AG04449 (cell line): ENCODE measurements at regions of chr1 and their contacts with region 1.

Region 1: GRCh38 chr1:163174524-163175437 is 27.9 kb downstream of the RGS5 start:
- DNase-seq: no peak
- H3K4me3 ChIP-seq: no peak overlapping the region
- CTCF ChIP-seq: peak; percentile 76

Region 2: DNA sequence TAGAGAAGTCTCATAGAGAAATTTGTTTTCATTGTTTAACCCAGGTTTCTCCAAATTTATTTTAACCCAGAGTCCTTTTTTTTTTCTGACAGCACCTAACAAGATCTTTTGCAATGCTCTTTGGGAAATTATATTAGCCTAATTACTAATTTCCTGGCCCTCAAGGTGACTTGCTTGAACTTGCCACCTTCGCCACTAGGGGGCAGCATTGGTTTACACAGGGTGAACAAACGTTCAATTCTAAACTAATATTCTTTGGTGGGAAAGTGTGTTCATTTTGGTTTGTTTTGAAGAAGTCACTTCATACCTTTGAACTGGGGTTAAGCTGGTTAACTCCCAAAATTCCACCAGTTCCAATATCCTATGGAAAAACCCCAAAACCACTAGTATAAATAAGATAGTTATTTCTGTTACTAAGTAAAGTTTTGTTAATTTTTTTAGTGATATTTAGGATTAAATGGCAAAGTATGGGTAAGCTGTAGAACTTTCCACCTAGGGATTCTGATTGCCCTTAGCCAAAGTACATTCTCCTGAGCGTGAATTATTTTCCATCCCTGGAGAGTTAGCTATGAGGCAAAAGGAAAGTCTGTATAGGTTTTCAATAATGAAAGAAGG is 326.8 kb before region 1 on chr1:
- CTCF ChIA-PET with region 1: interaction called, 79 read pairs
- POLR2A ChIA-PET with region 1: no interaction called
- DNase-seq: no peak
- H3K4me3 ChIP-seq: no peak overlapping the region
- CTCF ChIP-seq: peak; percentile 83

Region 3: DNA sequence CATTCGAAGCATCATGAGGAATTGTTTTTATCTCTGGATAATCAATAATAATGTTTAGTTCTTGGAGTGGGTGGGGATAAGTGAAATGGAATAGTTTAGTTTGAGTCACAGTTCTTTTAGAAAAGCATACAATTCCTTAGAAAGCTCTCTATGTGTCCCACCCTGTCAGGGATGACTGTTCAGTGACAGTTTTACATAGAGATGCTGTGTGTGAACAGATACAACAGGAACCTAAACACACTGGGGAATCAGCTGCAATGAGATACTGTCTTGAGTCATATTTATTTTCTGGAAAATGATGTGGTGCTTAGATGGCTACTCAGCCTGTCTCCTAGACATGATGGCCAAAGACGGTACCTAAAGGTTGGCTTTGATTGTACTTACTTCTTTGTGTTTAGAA is 288.1 kb before region 1 on chr1:
- CTCF ChIA-PET with region 1: interaction called, 13 read pairs
- POLR2A ChIA-PET with region 1: no interaction called
- DNase-seq: no peak
- H3K4me3 ChIP-seq: no peak overlapping the region
- CTCF ChIP-seq: no peak

Region 4: GRCh38 chr1:162899422-162900146 is 275.2 kb before region 1 on chr1:
- CTCF ChIA-PET with region 1: interaction called, 13 read pairs
- POLR2A ChIA-PET with region 1: no interaction called
- DNase-seq: peak; percentile 83
- H3K4me3 ChIP-seq: no peak overlapping the region
- CTCF ChIP-seq: no peak

Region 5: GRCh38 chr1:162951553-162952315 is 223.0 kb before region 1 on chr1:
- CTCF ChIA-PET with region 1: no interaction called
- POLR2A ChIA-PET with region 1: no interaction called
- DNase-seq: no peak
- H3K4me3 ChIP-seq: no peak overlapping the region
- CTCF ChIP-seq: no peak

Region 6: DNA sequence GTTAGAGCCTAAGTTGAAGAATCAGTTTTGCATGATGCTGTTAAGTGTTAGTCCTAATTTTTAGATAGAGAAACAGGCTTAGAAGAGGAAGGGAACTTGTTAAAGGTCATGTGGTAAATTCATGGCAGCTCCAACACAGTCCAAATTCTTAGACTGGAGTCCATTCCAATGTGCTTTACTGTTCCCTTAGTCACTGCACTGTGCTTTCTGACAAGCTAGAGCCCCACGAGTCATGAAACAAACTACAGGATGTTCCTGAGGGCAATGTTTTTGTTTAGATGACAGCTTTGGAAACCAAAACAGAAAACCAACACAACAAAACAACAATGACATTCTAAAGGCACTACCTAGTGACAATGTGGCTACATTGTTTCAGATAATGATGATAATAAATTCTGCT is 128.7 kb before region 1 on chr1:
- CTCF ChIA-PET with region 1: no interaction called
- POLR2A ChIA-PET with region 1: no interaction called
- DNase-seq: peak; percentile 29
- H3K4me3 ChIP-seq: no peak overlapping the region
- CTCF ChIP-seq: no peak

Region 7: GRCh38 chr1:163071405-163072255 is 103.2 kb before region 1 on chr1:
- CTCF ChIA-PET with region 1: interaction called, 207 read pairs
- POLR2A ChIA-PET with region 1: no interaction called
- DNase-seq: no peak
- H3K4me3 ChIP-seq: peak overlapping the region; percentile 62
- CTCF ChIP-seq: peak; percentile 88

Region 8: GRCh38 chr1:163191301-163191700 is 16.5 kb after region 1 on chr1:
- CTCF ChIA-PET with region 1: interaction called, 25 read pairs
- POLR2A ChIA-PET with region 1: no interaction called
- DNase-seq: no peak
- H3K4me3 ChIP-seq: no peak overlapping the region
- CTCF ChIP-seq: no peak

Region 9: DNA sequence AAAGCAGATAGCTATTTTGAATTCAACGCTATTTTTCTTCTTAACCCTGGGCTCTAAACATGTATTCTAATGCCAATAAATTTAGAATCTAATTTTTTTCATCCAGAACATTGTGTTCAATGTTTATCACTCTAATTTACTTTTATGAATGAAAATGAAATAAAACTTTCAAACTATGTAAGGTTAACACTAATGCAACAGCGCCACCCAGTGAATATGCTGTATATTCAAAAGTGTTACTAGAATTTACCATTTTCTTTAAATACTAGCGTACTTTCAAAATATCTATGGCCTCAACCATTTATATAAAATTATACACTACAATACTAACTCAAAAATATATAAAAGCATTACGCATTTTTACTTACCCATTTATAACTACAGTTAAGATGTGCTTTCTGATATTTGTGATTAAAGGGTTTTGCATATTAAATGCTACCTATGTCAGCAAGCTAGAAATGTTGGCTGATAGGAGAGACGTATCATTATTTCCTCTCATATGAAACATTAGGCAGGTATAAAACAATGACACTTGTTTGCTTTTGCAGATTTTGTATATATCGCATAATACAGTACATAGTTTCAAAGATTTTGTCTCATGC is 141.1 kb after region 1 on chr1:
- CTCF ChIA-PET with region 1: interaction called, 76 read pairs
- POLR2A ChIA-PET with region 1: no interaction called
- DNase-seq: no peak
- H3K4me3 ChIP-seq: no peak overlapping the region
- CTCF ChIP-seq: peak; percentile 39